HEK293 (cell line): ENCODE measurements at regions of chr19 and their contacts with region 1.

Region 1: DNA sequence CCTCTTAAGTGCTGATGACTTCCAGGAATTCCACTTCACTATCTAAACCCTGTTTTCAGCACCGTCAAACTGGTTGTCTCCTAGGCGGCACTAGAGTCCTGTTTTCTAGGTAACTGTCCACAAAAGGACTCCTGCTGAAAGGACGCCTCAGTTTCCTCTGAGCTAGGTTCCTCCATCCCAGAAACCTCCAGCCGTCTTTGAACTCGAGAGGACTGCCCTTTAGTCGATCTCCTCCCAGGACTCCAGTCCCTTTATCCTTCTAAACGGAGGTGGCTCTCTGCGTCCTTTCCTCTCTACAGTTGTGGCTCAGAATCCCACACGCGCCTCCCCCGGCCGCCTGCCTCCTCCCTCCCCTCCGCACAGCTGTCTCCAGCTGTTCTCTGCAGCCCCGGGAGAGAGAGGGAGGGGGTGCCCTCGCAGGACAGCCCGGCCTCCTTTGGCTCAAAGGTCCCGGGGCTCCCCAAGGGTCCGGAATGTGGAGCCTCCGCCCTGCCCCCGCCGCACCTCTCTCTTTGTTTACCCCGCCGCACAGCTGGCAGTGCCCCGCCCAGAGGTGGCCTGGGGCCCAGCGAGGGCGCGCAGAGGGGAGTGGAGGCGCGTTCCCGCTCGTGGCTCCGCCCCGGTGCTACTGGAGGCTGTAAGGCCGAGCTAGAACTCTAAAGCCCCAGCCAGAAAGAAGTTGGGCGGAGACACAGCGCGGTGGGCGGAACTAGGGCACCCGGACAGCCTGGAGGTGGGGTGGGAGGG is 2.4 kb downstream of the LTBP4 start:
- H3K4me3 ChIP-seq: peak overlapping the region; percentile 35
- H3K27ac ChIP-seq: peak overlapping the region; percentile 53
- H3K4me1 ChIP-seq: peaks cover 52% of the 10 kb centered on the region
- CTCF ChIP-seq: peak; percentile 58; the same call in 1 of the 2 replicates

Region 2: DNA sequence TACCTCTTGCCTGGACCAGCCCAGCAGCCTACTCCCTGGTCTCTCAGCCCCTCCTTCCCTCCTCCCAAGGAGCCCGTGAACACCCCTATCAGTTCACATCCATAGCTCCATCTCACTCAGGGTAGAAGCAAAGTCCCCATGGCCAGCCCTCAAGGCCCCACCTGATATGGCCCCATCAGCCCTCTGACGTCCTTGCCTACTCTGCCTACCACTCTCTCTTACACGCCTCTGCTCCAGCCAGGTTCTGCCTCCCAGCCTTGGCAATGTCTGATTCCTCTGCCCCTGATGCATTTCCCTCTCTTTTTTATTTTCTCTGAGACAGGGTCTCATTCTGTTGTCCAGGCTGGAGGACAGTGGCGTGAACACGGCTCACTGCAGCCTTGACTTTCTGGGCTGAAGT is 151.5 kb before region 1 on chr19:
- CTCF ChIA-PET with region 1: interaction called, 13 read pairs
- POLR2A ChIA-PET with region 1: no interaction called
- H3K4me3 ChIP-seq: no peak overlapping the region
- H3K27ac ChIP-seq: no peak overlapping the region
- H3K4me1 ChIP-seq: no peaks in the 10 kb centered on the region
- CTCF ChIP-seq: no peak

Region 3: DNA sequence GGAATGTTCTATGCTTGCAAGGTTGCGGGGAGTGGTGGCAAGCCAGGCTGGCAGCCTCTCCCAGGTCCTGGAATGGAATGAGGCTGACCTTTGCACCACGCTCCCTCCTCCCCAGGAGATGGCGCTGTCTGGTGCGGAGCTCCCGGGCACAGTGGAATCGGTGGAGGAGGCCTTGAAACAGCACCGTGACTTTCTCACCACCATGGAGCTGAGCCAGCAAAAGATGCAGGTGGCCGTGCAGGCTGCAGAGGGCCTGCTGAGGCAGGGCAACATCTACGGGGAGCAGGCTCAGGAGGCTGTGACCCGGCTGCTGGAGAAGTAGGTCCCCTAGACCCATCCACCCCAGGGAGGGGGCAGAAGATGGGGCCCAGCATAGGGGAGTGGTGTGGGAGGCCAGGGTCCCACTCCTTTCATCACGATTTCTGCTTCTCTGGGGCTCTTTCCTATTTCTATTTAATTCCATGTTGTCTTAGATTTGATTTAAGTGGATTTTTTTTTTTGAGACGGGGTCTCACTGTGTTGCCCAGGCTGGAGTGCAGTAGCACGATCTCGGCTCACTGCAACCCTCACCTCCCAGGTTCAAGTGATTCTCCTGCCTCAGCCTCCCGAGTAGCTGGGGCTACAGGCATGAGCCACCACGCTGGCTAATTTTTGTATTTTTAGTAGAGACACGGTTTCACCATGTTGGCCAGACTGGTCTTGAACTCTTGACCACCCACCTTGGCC is 80.1 kb before region 1 on chr19:
- CTCF ChIA-PET with region 1: interaction called, 20 read pairs
- POLR2A ChIA-PET with region 1: interaction called, 3 read pairs
- H3K4me3 ChIP-seq: no peak overlapping the region; the same call in 1 of the 2 replicates
- H3K27ac ChIP-seq: peak overlapping the region; percentile 47; the same call in 1 of the 2 replicates
- H3K4me1 ChIP-seq: peaks cover 9% of the 10 kb centered on the region
- CTCF ChIP-seq: peak; percentile 99

Region 4: DNA sequence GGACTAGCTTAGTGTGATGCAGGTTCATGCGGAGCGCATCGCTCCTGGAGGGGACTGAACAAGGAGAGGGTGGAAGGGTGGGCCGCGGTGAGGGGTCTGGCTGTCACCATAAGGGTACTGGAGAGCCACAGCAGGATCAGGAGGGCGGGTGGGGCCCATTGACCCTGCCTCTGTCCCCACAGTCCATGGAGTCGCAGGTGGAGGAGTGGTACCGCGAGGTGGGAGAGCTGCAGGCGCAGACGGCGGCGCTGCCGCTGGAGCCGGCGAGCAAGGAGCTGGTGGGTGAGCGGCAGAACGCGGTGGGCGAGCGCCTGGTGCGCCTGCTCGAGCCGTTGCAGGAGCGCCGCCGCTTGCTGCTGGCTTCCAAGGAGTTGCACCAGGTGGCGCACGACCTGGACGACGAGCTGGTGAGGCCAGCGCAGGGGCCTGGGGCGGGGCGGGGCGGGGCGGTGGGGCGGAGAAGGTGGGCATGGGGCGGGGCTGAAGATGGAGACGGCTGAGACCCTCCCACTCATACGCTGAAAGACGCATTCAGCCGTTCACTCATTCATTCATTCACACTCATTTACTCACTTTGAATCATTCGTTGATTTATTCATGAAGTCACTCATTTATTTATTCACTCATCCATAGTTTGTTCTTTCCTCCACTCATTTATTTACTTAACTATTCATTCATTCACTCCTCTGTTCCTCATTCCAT is 54.4 kb before region 1 on chr19:
- CTCF ChIA-PET with region 1: interaction called, 82 read pairs
- POLR2A ChIA-PET with region 1: interaction called, 7 read pairs
- H3K4me3 ChIP-seq: peak overlapping the region; percentile 2
- H3K27ac ChIP-seq: no peak overlapping the region
- H3K4me1 ChIP-seq: peaks cover 9% of the 10 kb centered on the region
- CTCF ChIP-seq: peak; percentile 98

Region 5: DNA sequence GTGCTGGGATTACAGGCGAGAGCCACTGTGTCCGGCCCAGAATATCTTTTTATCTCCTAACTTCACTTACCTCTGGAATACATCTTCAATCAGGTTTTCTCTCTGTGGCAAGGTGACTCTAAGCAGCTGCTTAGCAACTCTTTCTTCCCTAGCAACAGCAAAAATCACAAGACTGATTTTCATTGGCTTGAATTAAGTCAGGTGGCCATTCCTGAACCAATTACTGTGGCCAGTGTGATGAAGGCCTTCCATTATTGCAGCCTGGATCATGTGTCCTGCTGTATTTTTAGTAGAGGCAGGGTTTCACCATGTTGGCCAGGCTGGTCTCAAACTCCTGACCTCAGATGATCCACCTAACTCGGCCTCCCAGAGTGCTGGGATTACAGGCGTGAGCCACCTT is 11.4 kb before region 1 on chr19:
- CTCF ChIA-PET with region 1: interaction called, 25 read pairs
- POLR2A ChIA-PET with region 1: interaction called, 7 read pairs
- H3K4me3 ChIP-seq: no peak overlapping the region
- H3K27ac ChIP-seq: no peak overlapping the region
- H3K4me1 ChIP-seq: peaks cover 14% of the 10 kb centered on the region
- CTCF ChIP-seq: no peak

Region 6: DNA sequence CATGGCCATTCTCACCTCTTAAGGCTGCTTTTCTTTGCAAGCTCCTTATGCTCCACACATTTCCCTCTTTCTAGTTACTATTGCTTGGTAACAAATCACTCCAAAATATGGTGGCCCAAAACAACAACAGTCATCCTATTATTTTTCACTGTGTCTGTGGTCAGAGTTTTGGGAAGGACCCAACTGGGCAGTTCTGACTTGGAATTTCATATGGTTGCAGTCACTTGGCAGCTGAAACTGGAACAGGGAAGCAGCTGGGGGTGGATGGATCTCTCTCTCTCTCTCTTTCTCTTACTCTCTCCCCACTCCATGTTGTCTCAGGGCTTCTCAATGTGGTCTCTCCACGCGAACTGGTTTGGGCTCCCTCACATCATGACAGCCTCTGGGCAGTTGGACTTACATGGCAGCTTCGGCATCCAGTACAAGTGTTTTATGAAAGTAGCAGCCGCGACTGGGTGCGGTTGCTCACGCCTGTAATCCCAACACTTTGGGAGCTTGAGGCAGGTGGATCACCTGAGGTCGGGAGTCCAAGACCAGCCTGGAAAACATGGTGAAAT is 47.3 kb after region 1 on chr19:
- CTCF ChIA-PET with region 1: interaction called, 7 read pairs
- POLR2A ChIA-PET with region 1: interaction called, 10 read pairs
- H3K4me3 ChIP-seq: no peak overlapping the region
- H3K27ac ChIP-seq: no peak overlapping the region
- H3K4me1 ChIP-seq: peaks cover 11% of the 10 kb centered on the region
- CTCF ChIP-seq: no peak

Region 7: GRCh38 chr19:40674291-40674690 is 70.7 kb after region 1 on chr19:
- CTCF ChIA-PET with region 1: no interaction called
- POLR2A ChIA-PET with region 1: no interaction called
- H3K4me3 ChIP-seq: no peak overlapping the region
- H3K27ac ChIP-seq: peak overlapping the region; percentile 17; the same call in 1 of the 2 replicates
- H3K4me1 ChIP-seq: peaks cover 3% of the 10 kb centered on the region; the same call in 1 of the 2 replicates
- CTCF ChIP-seq: no peak

Region 8: DNA sequence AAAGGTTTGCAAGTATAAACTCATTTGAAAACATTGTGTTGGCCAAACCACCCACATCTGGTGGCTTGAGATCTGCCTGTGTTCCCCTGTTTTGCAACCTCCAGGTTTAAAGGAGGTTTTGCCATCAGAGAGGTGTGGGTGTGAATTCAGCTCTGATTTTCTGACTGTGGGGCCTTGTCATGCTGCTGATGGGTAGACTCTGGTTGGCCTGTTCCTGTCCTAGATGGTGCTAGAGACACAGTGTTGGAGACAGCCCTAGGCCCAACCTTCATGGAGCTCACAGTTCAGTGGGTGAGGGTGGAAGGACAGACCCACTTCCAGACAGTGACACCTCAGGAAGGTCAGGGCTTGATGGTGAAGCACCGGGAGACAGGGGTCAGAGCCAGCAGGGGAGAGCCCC is 182.0 kb after region 1 on chr19:
- CTCF ChIA-PET with region 1: no interaction called
- POLR2A ChIA-PET with region 1: no interaction called
- H3K4me3 ChIP-seq: no peak overlapping the region
- H3K27ac ChIP-seq: no peak overlapping the region
- H3K4me1 ChIP-seq: no peaks in the 10 kb centered on the region
- CTCF ChIP-seq: peak; percentile 49